Activated T-helper 2 cell treated with anti-CD3 and anti-CD28 coated beads, Interferon-gamma antibody, Interleukin-2, Interleukin-4, amounts not matched to agents 10 μg/mL and 5 μg/mL and 100 μg/mL, durations not matched to agents 14 hours and 24 hours and 36 hours (primary cell): ENCODE measurements at regions of chr22 and their contacts with region 1.

Region 1: DNA sequence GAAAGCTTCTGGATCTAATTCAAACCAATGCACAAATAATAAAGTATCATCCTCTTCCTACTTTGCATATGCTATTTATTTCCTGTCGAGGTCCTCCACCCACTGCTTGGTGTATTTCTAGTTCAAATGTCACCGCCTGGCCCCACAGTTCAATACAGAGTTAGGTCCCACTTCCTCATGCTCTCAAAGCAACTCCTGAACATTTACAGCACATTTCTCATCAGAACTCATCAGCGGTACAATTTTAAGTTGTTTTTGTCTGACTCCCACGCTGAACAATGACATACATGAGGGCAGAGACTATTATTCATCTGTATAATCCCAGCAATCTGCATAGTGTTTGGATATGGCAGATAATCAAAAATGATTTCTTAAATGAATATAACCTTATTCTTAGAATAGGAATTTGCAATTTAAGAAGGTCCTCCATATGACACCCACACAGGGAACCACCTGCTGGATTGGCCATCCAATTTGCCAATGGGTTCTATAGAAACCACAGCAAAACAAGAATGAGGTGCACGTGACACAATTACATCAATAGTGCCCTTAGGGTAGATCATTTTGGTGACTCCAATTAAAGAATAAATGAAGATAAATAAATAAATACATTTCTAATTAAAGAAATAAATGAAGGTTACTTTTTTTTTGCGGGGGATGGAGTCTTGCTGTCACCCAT is 54.2 kb downstream of the SLC25A17 start:
- DNase-seq: no peak
- H3K4me3 Mint-ChIP-seq: no peak overlapping the region
- H3K27ac Mint-ChIP-seq: peak overlapping the region; percentile 83
- H3K4me1 Mint-ChIP-seq: peaks cover 21% of the 10 kb centered on the region
- H3K27me3 Mint-ChIP-seq: no peaks in the 10 kb centered on the region

Region 2: GRCh38 chr22:40714192-40714951 is 50.5 kb before region 1 on chr22:
- intact Hi-C with region 1: loop called (anchors 5 kb)
- DNase-seq: no peak
- H3K4me3 Mint-ChIP-seq: no peak overlapping the region
- H3K27ac Mint-ChIP-seq: no peak overlapping the region
- H3K4me1 Mint-ChIP-seq: peaks cover 27% of the 10 kb centered on the region
- H3K27me3 Mint-ChIP-seq: peaks cover 17% of the 10 kb centered on the region

Region 3: DNA sequence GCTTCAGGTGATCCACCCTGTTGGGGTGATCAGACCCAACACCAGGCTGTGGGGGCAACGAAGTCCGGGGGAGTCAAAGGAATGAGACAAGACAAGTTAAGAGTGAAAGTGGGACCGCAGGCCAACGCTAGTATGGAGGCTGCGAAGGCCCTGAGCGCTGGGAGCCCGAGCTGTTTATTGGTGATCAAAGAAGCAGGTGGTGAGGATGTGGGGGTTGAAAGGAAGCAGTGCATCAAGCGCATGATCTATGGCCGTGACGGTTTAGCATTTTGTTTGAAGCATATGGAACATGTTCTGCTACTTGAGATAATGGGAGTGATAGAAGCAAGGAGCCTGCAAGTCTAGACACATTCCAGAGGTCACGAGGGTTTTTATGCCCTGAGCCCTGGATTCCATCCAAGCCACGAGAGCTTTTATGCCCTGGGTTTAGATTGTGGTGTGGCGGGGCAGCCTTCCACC is 36.1 kb before region 1 on chr22:
- intact Hi-C with region 1: loop called (anchors 5 kb)
- DNase-seq: peak; percentile 49
- H3K4me3 Mint-ChIP-seq: peak overlapping the region; percentile 51
- H3K27ac Mint-ChIP-seq: peak overlapping the region; percentile 58
- H3K4me1 Mint-ChIP-seq: peaks cover 42% of the 10 kb centered on the region
- H3K27me3 Mint-ChIP-seq: peaks cover under 1% of the 10 kb centered on the region

Region 4: DNA sequence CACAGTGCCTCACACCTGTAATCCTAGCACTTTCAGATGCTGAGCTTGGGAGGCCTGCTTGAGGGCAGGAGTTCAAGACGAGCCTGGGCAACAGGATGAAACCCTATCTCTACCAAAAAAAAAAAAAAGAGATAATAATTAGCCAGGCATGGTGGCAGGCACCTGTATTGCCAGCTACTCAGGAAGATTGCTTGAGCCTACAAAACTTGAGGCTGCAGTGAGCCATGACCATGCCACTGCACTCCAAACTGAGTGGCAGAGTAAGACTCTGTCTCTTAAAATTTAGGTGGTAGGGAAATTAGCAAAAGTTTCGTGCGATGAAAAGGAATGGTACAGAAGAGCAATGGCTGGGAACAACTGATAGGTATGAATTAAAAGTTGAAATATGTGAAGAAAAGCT is 73.6 kb after region 1 on chr22:
- intact Hi-C with region 1: no loop called
- DNase-seq: no peak
- H3K4me3 Mint-ChIP-seq: no peak overlapping the region
- H3K27ac Mint-ChIP-seq: peak overlapping the region; percentile 13
- H3K4me1 Mint-ChIP-seq: peaks cover 6% of the 10 kb centered on the region
- H3K27me3 Mint-ChIP-seq: no peaks in the 10 kb centered on the region

Region 5: GRCh38 chr22:40877488-40877887 is 112.6 kb after region 1 on chr22:
- intact Hi-C with region 1: no loop called
- DNase-seq: no peak
- H3K4me3 Mint-ChIP-seq: no peak overlapping the region
- H3K27ac Mint-ChIP-seq: no peak overlapping the region
- H3K4me1 Mint-ChIP-seq: no peaks in the 10 kb centered on the region
- H3K27me3 Mint-ChIP-seq: no peaks in the 10 kb centered on the region